ENCODE measurements at regions of chr9 and their contacts with region 1.

Region 1: GRCh38 chr9:110623462-110624025 is 44.0 kb upstream of the SVEP1 start:
- DNase-seq: peak in 4 of 14 experiments; percentile 6 to 35 (median 21)
- ATAC-seq: no peak
- H3K4me3 ChIP-seq: no peak overlapping the region
- H3K4me3 Mint-ChIP-seq: no peak overlapping the region
- H3K27ac ChIP-seq: no peak overlapping the region
- H3K27ac Mint-ChIP-seq: no peak overlapping the region
- H3K4me1 ChIP-seq: no peaks in the 10 kb centered on the region
- H3K4me1 Mint-ChIP-seq: no peaks in the 10 kb centered on the region
- H3K27me3 ChIP-seq: no peaks in the 10 kb centered on the region
- H3K27me3 Mint-ChIP-seq: peaks cover 10% of the 10 kb centered on the region
- CTCF ChIP-seq: peak; percentile 40

Region 2: GRCh38 chr9:109579191-109579948 is 1044.2 kb before region 1 on chr9:
- CTCF ChIA-PET with region 1: no interaction called
- POLR2A ChIA-PET with region 1: no interaction called
- intact Hi-C with region 1: loop called in 1 of 2 experiments (anchors 5 kb)
- DNase-seq: no peak
- ATAC-seq: no peak
- H3K4me3 ChIP-seq: no peak overlapping the region
- H3K4me3 Mint-ChIP-seq: no peak overlapping the region
- H3K27ac ChIP-seq: no peak overlapping the region
- H3K27ac Mint-ChIP-seq: no peak overlapping the region
- H3K4me1 ChIP-seq: no peaks in the 10 kb centered on the region
- H3K4me1 Mint-ChIP-seq: no peaks in the 10 kb centered on the region
- H3K27me3 ChIP-seq: no peaks in the 10 kb centered on the region
- H3K27me3 Mint-ChIP-seq: peaks cover 4% of the 10 kb centered on the region
- CTCF ChIP-seq: no peak

Region 3: GRCh38 chr9:110183208-110184145 is 440.1 kb before region 1 on chr9:
- CTCF ChIA-PET with region 1: no interaction called
- POLR2A ChIA-PET with region 1: no interaction called
- intact Hi-C with region 1: loop called in 1 of 2 experiments (anchors 5 kb)
- DNase-seq: peak in 13 of 14 experiments; percentile 5 to 70 (median 29)
- ATAC-seq: peak; percentile 58
- H3K4me3 ChIP-seq: no peak overlapping the region
- H3K4me3 Mint-ChIP-seq: no peak overlapping the region
- H3K27ac ChIP-seq: no peak overlapping the region
- H3K27ac Mint-ChIP-seq: no peak overlapping the region
- H3K4me1 ChIP-seq: no peaks in the 10 kb centered on the region
- H3K4me1 Mint-ChIP-seq: peaks cover 6% of the 10 kb centered on the region
- H3K27me3 ChIP-seq: no peaks in the 10 kb centered on the region
- H3K27me3 Mint-ChIP-seq: peaks cover 5% of the 10 kb centered on the region
- CTCF ChIP-seq: peak; percentile 82

Region 4: GRCh38 chr9:110599164-110599867 is 24.2 kb before region 1 on chr9:
- CTCF ChIA-PET with region 1: no interaction called
- POLR2A ChIA-PET with region 1: no interaction called
- intact Hi-C with region 1: loop called in 1 of 2 experiments (anchors 2 kb)
- DNase-seq: peak in 1 of 14 experiments; percentile 21
- ATAC-seq: no peak
- H3K4me3 ChIP-seq: no peak overlapping the region
- H3K4me3 Mint-ChIP-seq: no peak overlapping the region
- H3K27ac ChIP-seq: no peak overlapping the region
- H3K27ac Mint-ChIP-seq: no peak overlapping the region
- H3K4me1 ChIP-seq: no peaks in the 10 kb centered on the region
- H3K4me1 Mint-ChIP-seq: no peaks in the 10 kb centered on the region
- H3K27me3 ChIP-seq: no peaks in the 10 kb centered on the region
- H3K27me3 Mint-ChIP-seq: peaks cover 12% of the 10 kb centered on the region
- CTCF ChIP-seq: no peak

Region 5: GRCh38 chr9:110638381-110638954 is 14.9 kb after region 1 on chr9:
- CTCF ChIA-PET with region 1: no interaction called
- POLR2A ChIA-PET with region 1: no interaction called
- intact Hi-C with region 1: no loop called
- DNase-seq: no peak
- ATAC-seq: no peak
- H3K4me3 ChIP-seq: no peak overlapping the region
- H3K4me3 Mint-ChIP-seq: no peak overlapping the region
- H3K27ac ChIP-seq: no peak overlapping the region
- H3K27ac Mint-ChIP-seq: no peak overlapping the region
- H3K4me1 ChIP-seq: no peaks in the 10 kb centered on the region
- H3K4me1 Mint-ChIP-seq: no peaks in the 10 kb centered on the region
- H3K27me3 ChIP-seq: no peaks in the 10 kb centered on the region
- H3K27me3 Mint-ChIP-seq: no peaks in the 10 kb centered on the region
- CTCF ChIP-seq: no peak

Region 6: DNA sequence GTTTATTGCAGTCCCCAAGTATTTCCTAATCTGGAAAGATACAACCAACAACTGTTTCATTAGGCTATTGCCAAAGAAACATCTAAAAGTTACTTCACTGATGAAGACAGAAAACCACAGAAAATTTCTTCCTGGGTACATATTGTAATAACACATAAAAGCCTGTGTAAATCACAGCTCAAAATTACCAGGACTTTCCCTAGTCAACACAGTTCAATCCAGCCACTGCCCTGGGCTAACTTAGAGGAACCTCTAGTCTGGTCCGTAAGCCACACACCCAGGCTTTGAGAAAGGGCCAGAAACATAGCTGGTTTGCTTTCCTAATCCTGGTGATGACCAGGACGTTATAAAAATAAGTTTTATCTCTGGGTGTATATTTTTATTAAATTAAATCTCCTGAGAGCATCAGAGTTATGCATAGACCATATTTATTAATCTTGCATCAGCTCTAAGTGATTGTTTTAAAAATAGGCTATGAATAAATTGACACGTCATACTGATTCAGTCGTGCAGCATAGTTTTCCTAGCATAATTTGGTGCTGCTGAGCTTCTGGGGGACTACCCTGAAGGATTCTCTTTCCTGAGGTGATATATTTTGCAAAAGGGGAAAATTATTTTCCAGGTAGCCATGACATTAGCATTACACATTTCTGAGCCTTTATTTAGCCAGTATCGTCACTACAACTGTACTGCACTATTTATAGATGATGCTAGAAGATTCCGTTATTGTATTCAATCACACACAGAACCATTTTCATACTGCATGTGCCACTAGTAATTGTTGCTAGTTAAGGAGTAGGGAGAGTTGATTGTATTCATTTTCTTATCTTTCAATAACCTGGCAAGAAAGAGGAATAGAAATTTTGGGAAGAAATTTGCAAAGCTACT is 32.5 kb after region 1 on chr9:
- CTCF ChIA-PET with region 1: no interaction called
- POLR2A ChIA-PET with region 1: no interaction called
- intact Hi-C with region 1: no loop called
- DNase-seq: no peak
- ATAC-seq: no peak
- H3K4me3 ChIP-seq: no peak overlapping the region
- H3K4me3 Mint-ChIP-seq: no peak overlapping the region
- H3K27ac ChIP-seq: no peak overlapping the region
- H3K27ac Mint-ChIP-seq: no peak overlapping the region
- H3K4me1 ChIP-seq: no peaks in the 10 kb centered on the region
- H3K4me1 Mint-ChIP-seq: no peaks in the 10 kb centered on the region
- H3K27me3 ChIP-seq: no peaks in the 10 kb centered on the region
- H3K27me3 Mint-ChIP-seq: no peaks in the 10 kb centered on the region
- CTCF ChIP-seq: no peak

Measured in CD4-positive, alpha-beta T cell (primary cell).